ENCODE measurements at regions of chr19 and their contacts with region 1.

Region 1: GRCh38 chr19:10653715-10654492 is at the start of gene ILF3:
- DNase-seq: peak; percentile 100
- ATAC-seq: peak; percentile 75 to 93 (median 76)
- H3K4me3 ChIP-seq: peak within 1 kb of the TSS; percentile 100
- H3K4me3 Mint-ChIP-seq: peak within 1 kb of the TSS; percentile 91
- H3K27ac ChIP-seq: peak within 1 kb of the TSS; percentile 100
- H3K27ac Mint-ChIP-seq: peak within 1 kb of the TSS; percentile 97 to 98
- H3K4me1 ChIP-seq: peaks cover 39% of the 10 kb centered on the region
- H3K4me1 Mint-ChIP-seq: peaks cover 31 to 40% of the 10 kb centered on the region in 2 donors
- H3K27me3 ChIP-seq: no peaks in the 10 kb centered on the region
- H3K27me3 Mint-ChIP-seq: no peaks in the 10 kb centered on the region
- CTCF ChIP-seq: no peak
- total RNA-seq, gene ILF3: 329 to 365 (median 332) TPM

Region 2: GRCh38 chr19:10424011-10424637 is 229.8 kb before region 1 on chr19:
- intact Hi-C with region 1: loop called (anchors 5 kb)
- DNase-seq: peak; percentile 69 to 81
- ATAC-seq: peak; percentile 14 to 28 (median 23)
- H3K4me3 ChIP-seq: peak overlapping the region; percentile 24
- H3K4me3 Mint-ChIP-seq: peak overlapping the region; percentile 88
- H3K27ac ChIP-seq: peak overlapping the region; percentile 69
- H3K27ac Mint-ChIP-seq: peak overlapping the region; percentile 95 to 96
- H3K4me1 ChIP-seq: peaks cover 87% of the 10 kb centered on the region
- H3K4me1 Mint-ChIP-seq: peaks cover 49 to 73% of the 10 kb centered on the region in 2 donors
- H3K27me3 ChIP-seq: peaks cover 29% of the 10 kb centered on the region
- H3K27me3 Mint-ChIP-seq: peaks cover 27% of the 10 kb centered on the region in 2 donors
- CTCF ChIP-seq: peak; percentile 91

Region 3: DNA sequence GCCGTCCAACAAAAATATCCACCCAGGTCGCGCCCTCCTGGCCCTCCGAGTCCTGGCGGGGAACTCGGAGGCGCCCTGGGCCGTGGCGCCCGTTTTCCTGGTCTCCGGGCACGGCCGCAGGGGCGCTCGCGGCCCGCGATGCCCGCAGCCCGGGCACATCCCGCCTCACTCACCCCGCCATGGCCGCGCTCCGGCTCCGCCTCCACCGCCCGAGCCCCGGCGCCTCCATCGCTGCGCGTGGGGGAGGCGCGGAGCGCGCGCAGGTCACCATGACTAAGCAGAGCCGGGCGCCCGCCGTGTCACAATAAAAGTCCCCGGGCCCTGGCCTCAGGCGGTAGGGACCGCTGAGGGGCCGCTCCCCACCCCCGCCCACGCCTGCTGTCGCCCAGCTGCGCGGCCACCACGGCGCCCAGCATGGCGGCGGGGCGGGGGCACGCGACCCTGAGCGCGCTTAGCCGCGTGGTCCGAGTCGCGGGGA is 151.3 kb before region 1 on chr19:
- intact Hi-C with region 1: loop called (anchors 2 kb)
- DNase-seq: peak; percentile 91 to 92
- ATAC-seq: peak; percentile 82 to 95 (median 86)
- H3K4me3 ChIP-seq: peak overlapping the region; percentile 99
- H3K4me3 Mint-ChIP-seq: peak overlapping the region; percentile 88
- H3K27ac ChIP-seq: peak overlapping the region; percentile 98
- H3K27ac Mint-ChIP-seq: peak overlapping the region; percentile 84 to 96
- H3K4me1 ChIP-seq: peaks cover 61% of the 10 kb centered on the region
- H3K4me1 Mint-ChIP-seq: peaks cover 34 to 53% of the 10 kb centered on the region in 2 donors
- H3K27me3 ChIP-seq: no peaks in the 10 kb centered on the region
- H3K27me3 Mint-ChIP-seq: no peaks in the 10 kb centered on the region
- CTCF ChIP-seq: peak; percentile 30

Region 4: DNA sequence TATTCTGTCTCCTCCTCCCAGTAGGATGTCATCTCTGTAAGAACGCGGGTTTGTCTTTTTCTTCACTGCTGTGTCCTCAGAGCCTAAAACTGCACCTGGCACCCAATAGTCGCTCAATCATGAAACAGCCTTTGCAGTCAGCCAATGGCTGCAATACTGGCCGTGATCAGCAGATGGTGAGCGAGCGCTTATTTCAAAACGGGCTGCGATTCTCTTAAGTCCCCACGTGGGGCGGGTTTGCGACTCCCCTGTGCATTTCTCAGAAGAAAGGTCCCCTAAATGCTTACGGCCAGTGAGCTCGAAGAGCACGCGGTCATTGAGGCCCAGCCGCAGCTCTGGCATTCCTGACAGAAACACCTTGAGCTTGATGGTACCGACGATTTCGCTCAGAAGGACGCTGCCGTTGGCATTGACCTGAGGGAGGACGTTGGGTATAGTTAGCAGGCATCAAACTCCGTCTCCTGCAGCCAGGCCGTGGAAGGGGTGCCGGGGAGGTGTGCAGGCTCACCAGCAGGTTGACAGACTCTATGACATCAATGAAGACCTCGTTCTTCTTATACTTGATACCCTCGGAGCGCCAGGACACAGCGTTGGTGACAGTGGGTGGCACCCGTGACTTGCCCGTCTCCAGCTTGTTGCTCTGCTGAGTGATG is 72.8 kb before region 1 on chr19:
- intact Hi-C with region 1: loop called (anchors 2 kb)
- DNase-seq: peak; percentile 88 to 95
- ATAC-seq: peak; percentile 96 to 100 (median 99)
- H3K4me3 ChIP-seq: no peak overlapping the region
- H3K4me3 Mint-ChIP-seq: peak overlapping the region; percentile 4
- H3K27ac ChIP-seq: no peak overlapping the region
- H3K27ac Mint-ChIP-seq: no peak overlapping the region
- H3K4me1 ChIP-seq: peaks cover 27% of the 10 kb centered on the region
- H3K4me1 Mint-ChIP-seq: peaks cover 12 to 21% of the 10 kb centered on the region in 2 donors
- H3K27me3 ChIP-seq: no peaks in the 10 kb centered on the region
- H3K27me3 Mint-ChIP-seq: no peaks in the 10 kb centered on the region
- CTCF ChIP-seq: peak; percentile 97

Region 5: DNA sequence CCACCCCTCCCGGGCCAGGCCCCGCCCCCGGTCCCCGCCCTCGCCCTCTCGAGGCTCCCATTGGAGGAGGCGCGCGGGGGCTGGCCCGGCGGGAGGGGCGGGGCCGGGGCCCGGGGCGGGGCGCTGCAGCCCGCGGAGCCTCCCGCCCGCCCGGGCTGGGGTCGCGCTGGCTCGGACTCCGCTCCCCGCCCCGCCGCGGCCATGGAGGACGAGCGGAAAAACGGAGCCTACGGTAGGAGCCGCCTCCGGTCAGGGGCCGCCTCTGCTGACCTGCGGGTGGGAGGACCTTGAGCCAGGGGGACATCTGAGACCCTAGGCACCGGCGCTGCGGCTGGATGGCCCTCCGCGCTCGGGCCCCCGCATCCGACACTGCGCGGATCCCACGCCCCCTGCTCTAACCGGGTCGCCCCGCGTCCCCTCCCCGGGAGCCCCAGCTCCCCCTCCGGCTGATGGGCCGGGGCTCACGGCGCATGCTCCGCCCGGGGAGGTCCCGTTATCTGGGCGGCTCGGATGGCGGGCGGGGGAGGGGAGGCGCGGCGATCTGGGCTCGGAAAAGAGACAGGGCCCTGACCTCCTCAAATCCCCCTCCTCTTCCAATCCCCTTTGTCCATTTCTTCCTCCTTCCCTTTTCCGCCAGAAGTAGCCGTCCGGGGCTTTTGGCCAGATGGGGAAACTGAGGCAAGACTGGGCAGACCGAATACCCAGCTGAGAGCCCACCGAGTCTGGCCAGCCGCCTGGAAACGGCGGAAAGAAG is 51.4 kb before region 1 on chr19:
- intact Hi-C with region 1: loop called (anchors 2 kb)
- DNase-seq: peak; percentile 84 to 90
- ATAC-seq: peak; percentile 80 to 95 (median 85)
- H3K4me3 ChIP-seq: peak overlapping the region; percentile 95
- H3K4me3 Mint-ChIP-seq: peak overlapping the region; percentile 97
- H3K27ac ChIP-seq: peak overlapping the region; percentile 99
- H3K27ac Mint-ChIP-seq: peak overlapping the region; percentile 95 to 98
- H3K4me1 ChIP-seq: peaks cover 59% of the 10 kb centered on the region
- H3K4me1 Mint-ChIP-seq: peaks cover 20 to 25% of the 10 kb centered on the region in 2 donors
- H3K27me3 ChIP-seq: no peaks in the 10 kb centered on the region
- H3K27me3 Mint-ChIP-seq: no peaks in the 10 kb centered on the region
- CTCF ChIP-seq: no peak

Region 6: GRCh38 chr19:10695401-10696398 is 41.8 kb after region 1 on chr19:
- intact Hi-C with region 1: loop called (anchors 5 kb)
- DNase-seq: peak; percentile 81 to 94
- ATAC-seq: peak; percentile 93 to 98 (median 98)
- H3K4me3 ChIP-seq: no peak overlapping the region
- H3K4me3 Mint-ChIP-seq: peak overlapping the region; percentile 96
- H3K27ac ChIP-seq: no peak overlapping the region
- H3K27ac Mint-ChIP-seq: peak overlapping the region; percentile 43 to 88
- H3K4me1 ChIP-seq: peaks cover 16% of the 10 kb centered on the region
- H3K4me1 Mint-ChIP-seq: peaks cover 18 to 19% of the 10 kb centered on the region in 2 donors
- H3K27me3 ChIP-seq: peaks cover 4% of the 10 kb centered on the region
- H3K27me3 Mint-ChIP-seq: peaks cover 3 to 6% of the 10 kb centered on the region in 2 donors
- CTCF ChIP-seq: no peak